Posterior vena cava (tissue), 2 donors: ENCODE measurements at regions of chr2 and their contacts with region 1.

Region 1: DNA sequence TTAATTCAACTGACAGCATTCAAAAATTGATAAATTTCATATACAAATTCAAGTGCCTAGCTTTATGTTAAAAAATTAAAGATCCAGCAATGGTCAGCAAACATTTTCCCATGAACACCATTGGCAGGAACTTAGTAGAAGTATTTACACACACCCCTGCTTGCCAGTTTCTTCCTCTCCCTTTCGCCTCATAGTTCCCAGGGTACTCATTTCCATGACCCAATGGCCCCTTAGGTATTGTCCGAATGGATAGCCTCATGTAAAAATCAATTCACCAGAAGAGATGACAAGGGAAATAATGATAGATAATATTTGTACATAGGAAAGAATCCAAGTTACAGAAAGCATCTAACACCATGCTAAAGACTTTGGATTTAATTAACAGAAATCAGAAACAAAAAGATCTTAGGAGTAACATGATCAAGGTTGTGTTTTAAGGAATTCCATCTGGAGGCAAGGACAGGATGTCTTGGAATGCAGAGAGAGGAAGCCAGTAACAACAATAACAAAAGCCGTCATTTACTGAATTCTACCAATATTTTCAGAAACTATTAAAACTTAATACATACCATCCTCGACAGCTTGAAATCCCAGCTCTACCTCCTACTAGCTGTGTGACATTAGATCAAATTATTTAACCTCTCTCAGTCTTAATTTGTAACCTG is 423.0 kb downstream of the IRS1 start:
- DNase-seq: no peak

Region 2: GRCh38 chr2:226037526-226037925 is 339.1 kb before region 1 on chr2:
- intact Hi-C with region 1: no loop called
- DNase-seq: no peak

Region 3: DNA sequence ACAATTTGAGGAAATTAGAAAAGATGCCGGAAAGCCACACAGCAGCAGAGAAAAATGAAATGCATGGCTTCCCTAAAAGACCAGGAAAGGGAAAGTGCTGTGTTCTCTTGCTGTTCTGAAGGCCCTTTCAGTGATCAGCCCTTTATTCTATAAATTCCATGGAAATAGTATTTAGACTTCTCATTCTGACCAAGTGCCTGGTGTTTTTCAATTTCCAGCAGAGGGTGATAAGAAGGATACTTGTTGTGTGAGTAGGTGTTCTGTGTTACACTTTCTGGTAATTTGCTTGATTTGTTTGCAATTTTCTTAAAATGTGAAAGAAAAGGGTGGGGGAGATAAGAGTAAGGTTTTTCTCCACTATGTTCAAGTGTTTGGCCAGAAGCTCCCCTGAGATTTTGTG is 81.5 kb before region 1 on chr2:
- intact Hi-C with region 1: loop called in 1 of 2 experiments (anchors 2 kb)
- DNase-seq: no peak